Thyroid gland (tissue), 4 donors: ENCODE measurements at regions of chr1 and their contacts with region 1.

Region 1: DNA sequence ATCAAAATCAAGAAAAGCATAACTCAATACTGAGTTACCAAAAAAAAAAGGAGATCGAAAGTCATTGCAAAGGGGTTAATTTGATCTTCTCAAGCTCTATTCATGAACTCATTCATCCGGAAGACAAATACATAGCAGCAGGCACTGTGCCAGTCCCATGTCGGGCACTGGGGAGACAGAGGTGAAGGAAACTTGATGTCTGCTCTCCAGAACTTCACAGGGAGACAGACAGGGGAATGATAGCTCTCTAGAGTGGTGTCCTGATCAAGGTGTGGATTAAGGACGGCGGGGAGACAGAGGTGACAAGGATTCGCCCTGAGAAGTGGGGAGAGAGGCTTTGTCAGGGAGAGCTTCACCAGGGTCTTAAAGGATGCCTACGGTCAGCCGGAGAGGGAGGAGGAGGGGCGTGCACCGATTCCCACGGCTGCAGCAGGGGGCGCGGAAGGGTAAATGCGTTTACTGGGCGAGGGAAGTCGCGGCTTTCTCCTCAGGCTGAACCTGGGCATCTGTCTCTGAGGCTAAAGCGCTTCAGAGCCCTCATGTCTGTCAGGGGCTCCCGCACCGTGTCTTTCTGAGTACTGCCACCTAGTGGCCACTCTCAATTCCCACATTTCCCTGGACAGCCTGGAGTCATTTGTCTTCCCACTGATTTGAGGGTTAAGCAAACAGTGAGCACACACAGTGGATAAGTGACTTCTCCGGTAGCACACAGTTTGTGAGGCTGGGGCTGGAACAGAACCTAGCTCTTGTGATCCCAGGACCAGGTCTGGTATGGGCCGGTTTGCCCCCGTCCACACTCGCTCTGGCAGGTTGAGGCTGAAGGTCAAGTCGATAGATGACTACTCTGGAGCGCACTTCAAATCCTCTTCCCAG is 152.8 kb downstream of the TENT5C start:
- DNase-seq: peak; percentile 82 to 86
- H3K4me3 ChIP-seq: peak overlapping the region in 1 of 3 donors; percentile 30
- H3K27ac ChIP-seq: no peak overlapping the region
- H3K4me1 ChIP-seq: peaks cover 5 to 13% of the 10 kb centered on the region in 2 donors
- H3K27me3 ChIP-seq: no peaks in the 10 kb centered on the region
- CTCF ChIP-seq: peak; percentile 72 to 94 (median 84)
- POLR2A ChIP-seq: no peak

Region 2: DNA sequence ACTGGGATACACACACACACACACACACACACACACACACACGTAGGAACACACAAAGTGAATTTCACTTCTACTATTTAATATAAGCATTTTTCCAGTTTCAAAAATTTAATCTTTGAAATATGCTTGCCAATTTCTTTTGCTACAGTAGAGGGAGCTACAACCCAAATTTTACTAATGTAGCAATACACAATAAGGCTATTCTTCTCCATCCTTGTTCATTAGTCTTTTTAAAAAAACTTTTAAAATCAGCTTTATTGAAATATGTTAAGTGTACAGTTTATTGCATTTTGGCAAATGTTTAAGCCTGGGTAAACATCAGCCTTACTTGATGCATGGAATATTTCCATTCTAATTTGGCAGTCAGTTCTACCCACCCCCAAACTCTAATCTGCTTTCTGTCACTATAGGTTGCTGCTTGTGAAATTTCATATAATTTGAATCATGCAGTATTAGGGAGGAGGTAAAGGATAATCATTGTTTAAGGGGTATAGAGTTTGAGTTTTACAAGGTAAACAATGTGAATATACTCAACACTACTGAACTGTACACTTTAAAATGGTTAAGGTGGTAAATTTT is 245.8 kb before region 1 on chr1:
- intact Hi-C with region 1: loop called (anchors 5 kb)
- DNase-seq: no peak
- H3K4me3 ChIP-seq: no peak overlapping the region
- H3K27ac ChIP-seq: no peak overlapping the region
- H3K4me1 ChIP-seq: no peaks in the 10 kb centered on the region
- H3K27me3 ChIP-seq: no peaks in the 10 kb centered on the region
- CTCF ChIP-seq: peak in 3 of 6 experiments; percentile 56 to 74 (median 68)
- POLR2A ChIP-seq: no peak

Region 3: DNA sequence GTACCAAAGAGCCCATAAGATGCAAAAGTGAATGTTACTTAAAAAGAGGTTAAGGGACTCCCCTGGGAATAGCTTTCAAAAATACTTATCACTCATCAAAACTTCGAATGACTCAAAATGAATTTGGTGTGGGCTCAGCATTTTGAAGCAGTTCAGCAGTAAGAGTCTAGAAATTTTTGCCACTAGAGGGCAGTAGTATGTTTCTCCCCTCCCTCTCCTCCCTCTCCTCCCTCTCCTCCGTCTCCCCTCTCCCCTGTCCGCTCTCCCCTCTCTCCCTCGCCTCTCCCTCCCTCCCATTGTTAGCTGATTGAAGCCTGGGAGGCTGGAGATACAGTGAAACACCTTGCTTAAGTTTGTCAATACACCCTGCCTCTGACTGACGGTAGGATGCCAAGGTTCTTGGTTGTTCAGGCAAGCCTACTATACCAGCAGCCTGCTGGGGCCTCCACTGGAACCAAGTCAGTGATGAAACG is 223.6 kb before region 1 on chr1:
- intact Hi-C with region 1: loop called (anchors 5 kb)
- DNase-seq: peak; percentile 56 to 66
- H3K4me3 ChIP-seq: no peak overlapping the region
- H3K27ac ChIP-seq: no peak overlapping the region
- H3K4me1 ChIP-seq: peaks cover 0 to 5% of the 10 kb centered on the region in 2 donors
- H3K27me3 ChIP-seq: no peaks in the 10 kb centered on the region
- CTCF ChIP-seq: peak; percentile 42 to 94 (median 65)
- POLR2A ChIP-seq: no peak

Region 4: GRCh38 chr1:117586747-117587498 is 171.8 kb before region 1 on chr1:
- intact Hi-C with region 1: loop called (anchors 10 kb)
- DNase-seq: no peak
- H3K4me3 ChIP-seq: no peak overlapping the region
- H3K27ac ChIP-seq: no peak overlapping the region
- H3K4me1 ChIP-seq: peaks cover 20% of the 10 kb centered on the region in 2 donors
- H3K27me3 ChIP-seq: no peaks in the 10 kb centered on the region
- CTCF ChIP-seq: no peak
- POLR2A ChIP-seq: no peak

Region 5: DNA sequence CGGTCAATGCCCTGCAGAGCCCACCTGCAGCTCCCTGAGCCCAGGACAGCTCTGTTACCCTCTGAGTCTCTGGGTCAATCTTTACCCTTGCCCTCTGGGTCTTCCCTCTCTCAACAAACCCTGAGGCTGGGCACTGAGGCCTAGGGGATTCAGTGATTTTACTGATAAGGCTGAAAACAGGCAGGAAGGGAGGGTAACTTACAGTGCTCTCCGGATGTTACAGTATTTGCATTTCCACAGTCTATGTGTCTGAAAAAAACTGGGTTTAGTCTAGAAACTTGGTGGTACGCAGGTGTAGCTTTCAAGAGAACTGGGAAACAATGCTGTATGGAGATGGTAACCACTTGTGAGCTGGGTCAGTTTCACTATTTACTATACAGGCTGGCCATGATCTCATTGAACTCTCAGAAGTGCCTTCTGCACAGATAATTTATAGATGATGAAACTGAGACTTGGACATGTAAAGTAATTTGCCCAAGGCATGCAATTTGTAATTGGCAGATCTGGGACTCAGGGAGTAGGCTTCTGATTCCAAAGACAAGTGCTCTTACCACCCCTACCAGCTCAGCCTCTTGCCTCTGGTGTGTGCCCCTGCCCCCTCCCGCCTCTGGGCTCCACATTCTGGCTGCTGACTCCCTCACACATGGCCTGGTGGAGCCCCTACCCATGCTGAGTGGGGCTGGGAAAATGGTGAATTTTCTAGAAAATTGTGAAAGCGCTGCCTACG is 104.0 kb before region 1 on chr1:
- intact Hi-C with region 1: no loop called
- DNase-seq: no peak
- H3K4me3 ChIP-seq: no peak overlapping the region
- H3K27ac ChIP-seq: no peak overlapping the region
- H3K4me1 ChIP-seq: no peaks in the 10 kb centered on the region
- H3K27me3 ChIP-seq: no peaks in the 10 kb centered on the region
- CTCF ChIP-seq: no peak
- POLR2A ChIP-seq: no peak

Region 6: GRCh38 chr1:117710710-117711109 is 48.0 kb before region 1 on chr1:
- intact Hi-C with region 1: no loop called
- DNase-seq: no peak
- H3K4me3 ChIP-seq: no peak overlapping the region
- H3K27ac ChIP-seq: no peak overlapping the region
- H3K4me1 ChIP-seq: peaks cover 0 to 10% of the 10 kb centered on the region in 2 donors
- H3K27me3 ChIP-seq: no peaks in the 10 kb centered on the region
- CTCF ChIP-seq: no peak
- POLR2A ChIP-seq: no peak